ENCODE measurements at regions of chr10 and their contacts with region 1.

Region 1: GRCh38 chr10:132331526-132332432 is at the start of gene LRRC27:
- DNase-seq: peak; percentile 99 to 100 (median 100)
- ATAC-seq: peak; percentile 93
- H3K4me3 ChIP-seq: peak within 1 kb of the TSS; percentile 96
- H3K4me3 Mint-ChIP-seq: peak within 1 kb of the TSS; percentile 86 to 96 (median 90)
- H3K27ac ChIP-seq: peak within 1 kb of the TSS; percentile 84
- H3K27ac Mint-ChIP-seq: peak within 1 kb of the TSS; percentile 86 to 97 (median 95)
- H3K4me1 ChIP-seq: peaks cover 11 to 24% of the 10 kb centered on the region in 2 donors
- H3K4me1 Mint-ChIP-seq: peaks cover 45 to 77% (median 66%) of the 10 kb centered on the region in 7 donors
- H3K27me3 ChIP-seq: no peaks in the 10 kb centered on the region
- H3K27me3 Mint-ChIP-seq: peaks cover 0 to 7% (median 0%) of the 10 kb centered on the region in 5 donors
- total RNA-seq, gene LRRC27: 3.4 to 10.8 (median 7.1) TPM

Region 2: GRCh38 chr10:131900350-131901146 is 431.2 kb before region 1 on chr10 and contains the start of gene PPP2R2D:
- CTCF ChIA-PET with region 1: no interaction called
- POLR2A ChIA-PET with region 1: no interaction called
- intact Hi-C with region 1: loop called (anchors 5 kb)
- DNase-seq: peak; percentile 95 to 99 (median 97)
- ATAC-seq: peak; percentile 90
- H3K4me3 ChIP-seq: peak within 1 kb of the TSS; percentile 64
- H3K4me3 Mint-ChIP-seq: peak within 1 kb of the TSS; percentile 90 to 95 (median 92)
- H3K27ac ChIP-seq: peak within 1 kb of the TSS; percentile 94
- H3K27ac Mint-ChIP-seq: peak within 1 kb of the TSS; percentile 86 to 97 (median 93)
- H3K4me1 ChIP-seq: peaks cover 34 to 40% of the 10 kb centered on the region in 2 donors
- H3K4me1 Mint-ChIP-seq: peaks cover 30 to 67% (median 61%) of the 10 kb centered on the region in 7 donors
- H3K27me3 ChIP-seq: no peaks in the 10 kb centered on the region
- H3K27me3 Mint-ChIP-seq: peaks cover 0 to 18% (median 0%) of the 10 kb centered on the region in 5 donors
- total RNA-seq, gene PPP2R2D: 37.1 to 61.3 (median 40.1) TPM

Region 3: DNA sequence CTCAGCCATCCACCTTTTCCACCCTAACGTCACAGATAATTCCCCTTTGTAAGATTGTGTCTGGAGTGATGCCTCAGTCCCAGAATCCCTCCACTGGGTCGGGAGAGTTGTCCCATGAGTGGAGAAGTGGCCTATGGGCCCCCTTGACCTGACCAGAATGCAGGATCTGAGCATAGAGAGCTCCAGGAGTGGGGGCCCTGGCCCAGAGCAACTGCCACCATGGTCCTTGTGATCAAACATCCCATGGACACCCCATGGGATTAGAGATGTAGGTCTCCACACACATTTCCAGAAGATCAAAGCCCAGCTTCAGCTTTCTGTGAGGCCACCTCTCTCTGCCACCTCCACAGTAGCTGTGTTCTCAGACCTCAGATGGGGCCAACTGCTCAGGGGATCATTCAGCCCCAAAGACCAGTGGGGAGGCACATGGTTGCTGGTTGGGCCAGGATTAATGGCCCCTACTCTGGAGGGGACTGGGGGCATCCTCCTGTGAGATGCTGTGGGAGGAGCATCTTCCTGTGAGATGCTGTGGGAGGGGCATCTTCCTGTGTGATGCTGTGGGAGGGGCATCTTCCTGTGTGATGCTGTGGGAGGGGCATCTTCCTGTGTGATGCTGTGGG is 173.5 kb before region 1 on chr10:
- CTCF ChIA-PET with region 1: no interaction called
- POLR2A ChIA-PET with region 1: no interaction called
- intact Hi-C with region 1: loop called (anchors 1 to 2 kb)
- DNase-seq: peak in 8 of 9 donors; percentile 51 to 71 (median 65)
- ATAC-seq: peak; percentile 58
- H3K4me3 ChIP-seq: no peak overlapping the region
- H3K4me3 Mint-ChIP-seq: peak overlapping the region in 4 of 10 donors; percentile 14 to 64 (median 30)
- H3K27ac ChIP-seq: peak overlapping the region; percentile 72
- H3K27ac Mint-ChIP-seq: peak overlapping the region in 8 of 9 donors; percentile 76 to 100 (median 95)
- H3K4me1 ChIP-seq: peaks cover 23 to 32% of the 10 kb centered on the region in 2 donors
- H3K4me1 Mint-ChIP-seq: peaks cover 13 to 46% (median 34%) of the 10 kb centered on the region in 7 donors
- H3K27me3 ChIP-seq: no peaks in the 10 kb centered on the region
- H3K27me3 Mint-ChIP-seq: no peaks in the 10 kb centered on the region

Region 4: GRCh38 chr10:132229834-132230556 is 101.8 kb before region 1 on chr10:
- CTCF ChIA-PET with region 1: no interaction called
- POLR2A ChIA-PET with region 1: no interaction called
- intact Hi-C with region 1: loop called in 1 of 2 experiments (anchors 1 kb)
- DNase-seq: peak in 7 of 9 donors; percentile 8 to 41 (median 35)
- ATAC-seq: peak; percentile 52
- H3K4me3 ChIP-seq: peak overlapping the region; percentile 44
- H3K4me3 Mint-ChIP-seq: peak overlapping the region; percentile 76 to 90 (median 86)
- H3K27ac ChIP-seq: peak overlapping the region; percentile 57
- H3K27ac Mint-ChIP-seq: peak overlapping the region; percentile 85 to 96 (median 92)
- H3K4me1 ChIP-seq: peaks cover 0 to 10% of the 10 kb centered on the region in 2 donors
- H3K4me1 Mint-ChIP-seq: peaks cover 22 to 51% (median 33%) of the 10 kb centered on the region in 7 donors
- H3K27me3 ChIP-seq: no peaks in the 10 kb centered on the region
- H3K27me3 Mint-ChIP-seq: no peaks in the 10 kb centered on the region

Region 5: GRCh38 chr10:132452631-132453469 is 121.1 kb after region 1 on chr10:
- CTCF ChIA-PET with region 1: no interaction called
- POLR2A ChIA-PET with region 1: no interaction called
- intact Hi-C with region 1: loop called in 1 of 2 experiments (anchors 1 kb)
- DNase-seq: peak; percentile 87 to 96 (median 93)
- ATAC-seq: peak; percentile 94
- H3K4me3 ChIP-seq: peak overlapping the region; percentile 31
- H3K4me3 Mint-ChIP-seq: peak overlapping the region; percentile 33 to 72 (median 62)
- H3K27ac ChIP-seq: peak overlapping the region; percentile 88
- H3K27ac Mint-ChIP-seq: peak overlapping the region; percentile 85 to 97 (median 93)
- H3K4me1 ChIP-seq: peaks cover 13 to 23% of the 10 kb centered on the region in 2 donors
- H3K4me1 Mint-ChIP-seq: peaks cover 11 to 34% (median 23%) of the 10 kb centered on the region in 7 donors
- H3K27me3 ChIP-seq: no peaks in the 10 kb centered on the region
- H3K27me3 Mint-ChIP-seq: no peaks in the 10 kb centered on the region

Region 6: DNA sequence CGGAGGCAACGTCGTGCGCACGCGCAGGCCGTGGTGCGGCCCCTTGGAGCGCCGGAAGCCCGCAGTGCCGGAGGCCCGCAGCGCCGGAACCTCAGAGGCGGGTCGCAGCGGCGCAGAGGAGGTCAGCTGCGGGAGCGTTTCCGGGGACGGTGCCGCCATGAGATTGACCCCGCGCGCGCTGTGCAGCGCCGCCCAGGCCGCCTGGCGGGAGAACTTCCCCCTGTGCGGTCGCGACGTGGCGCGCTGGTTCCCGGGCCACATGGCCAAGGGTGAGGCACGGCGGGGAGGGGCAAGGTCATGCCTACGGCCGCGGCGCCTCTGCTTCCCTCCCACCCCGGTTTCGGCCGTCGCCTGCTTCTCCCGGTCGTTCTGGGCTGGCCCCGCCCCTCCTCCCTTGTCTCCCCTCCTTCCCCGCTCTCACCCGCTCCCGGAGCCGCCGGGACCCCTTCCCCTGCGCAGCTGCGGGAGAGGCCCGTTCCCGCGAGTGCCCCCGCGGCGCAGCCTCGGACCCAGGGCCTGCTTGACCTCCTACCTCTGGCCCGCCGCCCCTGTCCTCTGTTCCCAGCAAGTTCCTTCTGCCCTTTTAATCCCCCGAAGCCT is 1062.4 kb after region 1 on chr10 and contains the start of gene MTG1:
- CTCF ChIA-PET with region 1: no interaction called
- POLR2A ChIA-PET with region 1: no interaction called
- intact Hi-C with region 1: loop called in 1 of 2 experiments (anchors 5 kb)
- DNase-seq: peak; percentile 84 to 99 (median 91)
- ATAC-seq: peak; percentile 94
- H3K4me3 ChIP-seq: peak within 1 kb of the TSS; percentile 72
- H3K4me3 Mint-ChIP-seq: peak within 1 kb of the TSS; percentile 89 to 98 (median 92)
- H3K27ac ChIP-seq: peak within 1 kb of the TSS; percentile 81
- H3K27ac Mint-ChIP-seq: peak within 1 kb of the TSS; percentile 71 to 96 (median 89)
- H3K4me1 ChIP-seq: peaks cover 32 to 33% of the 10 kb centered on the region in 2 donors
- H3K4me1 Mint-ChIP-seq: peaks cover 19 to 49% (median 39%) of the 10 kb centered on the region in 7 donors
- H3K27me3 ChIP-seq: no peaks in the 10 kb centered on the region
- H3K27me3 Mint-ChIP-seq: peaks cover 0 to 2% (median 0%) of the 10 kb centered on the region in 5 donors
- total RNA-seq, gene MTG1: 51.0 to 67.1 (median 57.2) TPM